OCI-LY7 (cell line): ENCODE measurements at regions of chr3 and their contacts with region 1.

Region 1: GRCh38 chr3:33980252-33980651 is 181.8 kb downstream of the PDCD6IP start:
- DNase-seq: peak; percentile 42
- H3K4me3 ChIP-seq: no peak overlapping the region
- H3K27ac ChIP-seq: no peak overlapping the region
- H3K4me1 ChIP-seq: no peaks in the 10 kb centered on the region
- CTCF ChIP-seq: peak; percentile 80

Region 2: GRCh38 chr3:34001990-34002389 is 21.7 kb after region 1 on chr3:
- CTCF ChIA-PET with region 1: no interaction called
- POLR2A ChIA-PET with region 1: no interaction called
- intact Hi-C with region 1: loop called (anchors 1 kb)
- DNase-seq: no peak
- H3K4me3 ChIP-seq: no peak overlapping the region
- H3K27ac ChIP-seq: no peak overlapping the region
- H3K4me1 ChIP-seq: peaks cover 16% of the 10 kb centered on the region
- CTCF ChIP-seq: no peak

Region 3: GRCh38 chr3:34090876-34091275 is 110.6 kb after region 1 on chr3:
- CTCF ChIA-PET with region 1: no interaction called
- POLR2A ChIA-PET with region 1: no interaction called
- intact Hi-C with region 1: no loop called
- DNase-seq: no peak
- H3K4me3 ChIP-seq: no peak overlapping the region
- H3K27ac ChIP-seq: no peak overlapping the region
- H3K4me1 ChIP-seq: no peaks in the 10 kb centered on the region
- CTCF ChIP-seq: no peak

Region 4: DNA sequence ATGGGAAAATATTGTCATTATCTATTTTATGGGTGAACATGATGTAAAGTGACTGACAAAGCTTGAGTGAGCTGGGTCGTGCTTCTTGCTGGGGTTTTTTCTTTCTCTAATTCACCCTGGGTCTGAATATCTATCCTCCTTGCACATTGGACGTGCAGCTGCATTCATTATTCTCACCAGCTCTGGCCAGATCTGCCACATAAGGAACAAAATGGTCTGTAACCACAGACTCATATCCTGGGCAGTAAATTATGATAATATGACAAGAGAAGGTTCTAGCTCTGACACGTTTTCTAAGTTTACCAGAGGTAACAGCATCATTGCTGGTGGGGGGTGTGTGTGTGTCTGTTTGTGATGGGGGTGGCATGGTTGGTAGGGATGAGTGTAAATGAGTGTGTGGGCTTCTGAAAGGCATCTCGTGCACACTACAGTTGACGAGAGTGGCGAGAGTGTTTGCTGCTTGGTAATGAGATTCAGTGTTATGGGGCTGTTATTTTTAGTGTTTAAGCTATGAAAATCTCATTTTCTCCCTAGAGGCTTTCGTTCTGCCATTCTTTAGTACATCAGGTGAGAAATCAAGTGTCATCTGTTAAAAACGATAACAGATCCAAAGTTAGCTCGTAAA is 236.6 kb after region 1 on chr3:
- CTCF ChIA-PET with region 1: no interaction called
- POLR2A ChIA-PET with region 1: no interaction called
- intact Hi-C with region 1: no loop called
- DNase-seq: no peak
- H3K4me3 ChIP-seq: no peak overlapping the region
- H3K27ac ChIP-seq: no peak overlapping the region
- H3K4me1 ChIP-seq: peaks cover 4% of the 10 kb centered on the region
- CTCF ChIP-seq: no peak

Region 5: DNA sequence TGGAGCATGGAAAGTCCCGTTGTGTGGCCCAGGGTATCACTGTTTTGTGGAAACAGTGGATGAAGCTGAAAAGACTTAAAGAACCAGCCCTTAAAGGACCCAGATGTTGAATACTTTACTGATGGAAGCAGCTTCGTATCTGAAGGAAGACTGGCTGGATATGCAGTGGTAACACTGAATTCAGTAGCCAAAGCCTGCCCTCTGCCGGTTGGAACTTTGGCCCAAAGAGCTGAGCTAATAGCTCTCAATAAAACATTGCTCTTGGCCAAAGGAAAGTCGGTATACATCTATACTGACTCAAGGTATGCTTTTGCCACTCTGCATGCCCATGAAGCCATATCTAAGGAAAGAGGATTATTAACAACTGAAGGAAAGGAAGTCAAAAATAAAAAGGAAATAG is 703.6 kb after region 1 on chr3:
- CTCF ChIA-PET with region 1: no interaction called
- POLR2A ChIA-PET with region 1: no interaction called
- intact Hi-C with region 1: loop called (anchors 2 kb)
- DNase-seq: peak; percentile 59
- H3K4me3 ChIP-seq: no peak overlapping the region
- H3K27ac ChIP-seq: no peak overlapping the region
- H3K4me1 ChIP-seq: no peaks in the 10 kb centered on the region
- CTCF ChIP-seq: peak; percentile 81